HepG2 (cell line): ENCODE measurements at regions of chr4 and their contacts with region 1.

Region 1: GRCh38 chr4:140851032-140851636 is 94.9 kb upstream of the TBC1D9 start:
- DNase-seq: peak; percentile 53
- ATAC-seq: peak; percentile 80
- H3K4me3 ChIP-seq: no peak overlapping the region
- H3K27ac ChIP-seq: no peak overlapping the region
- H3K4me1 ChIP-seq: 0 out of 2 replicates have a peak, but pooled peaks cover 5% of the 10 kb centered on the region
- H3K27me3 ChIP-seq: no peaks in the 10 kb centered on the region
- CTCF ChIP-seq: peak; percentile 85
- EP300 ChIP-seq: no peak
- POLR2A ChIP-seq: no peak
- RAD21 ChIP-seq: peak; percentile 82

Region 2: DNA sequence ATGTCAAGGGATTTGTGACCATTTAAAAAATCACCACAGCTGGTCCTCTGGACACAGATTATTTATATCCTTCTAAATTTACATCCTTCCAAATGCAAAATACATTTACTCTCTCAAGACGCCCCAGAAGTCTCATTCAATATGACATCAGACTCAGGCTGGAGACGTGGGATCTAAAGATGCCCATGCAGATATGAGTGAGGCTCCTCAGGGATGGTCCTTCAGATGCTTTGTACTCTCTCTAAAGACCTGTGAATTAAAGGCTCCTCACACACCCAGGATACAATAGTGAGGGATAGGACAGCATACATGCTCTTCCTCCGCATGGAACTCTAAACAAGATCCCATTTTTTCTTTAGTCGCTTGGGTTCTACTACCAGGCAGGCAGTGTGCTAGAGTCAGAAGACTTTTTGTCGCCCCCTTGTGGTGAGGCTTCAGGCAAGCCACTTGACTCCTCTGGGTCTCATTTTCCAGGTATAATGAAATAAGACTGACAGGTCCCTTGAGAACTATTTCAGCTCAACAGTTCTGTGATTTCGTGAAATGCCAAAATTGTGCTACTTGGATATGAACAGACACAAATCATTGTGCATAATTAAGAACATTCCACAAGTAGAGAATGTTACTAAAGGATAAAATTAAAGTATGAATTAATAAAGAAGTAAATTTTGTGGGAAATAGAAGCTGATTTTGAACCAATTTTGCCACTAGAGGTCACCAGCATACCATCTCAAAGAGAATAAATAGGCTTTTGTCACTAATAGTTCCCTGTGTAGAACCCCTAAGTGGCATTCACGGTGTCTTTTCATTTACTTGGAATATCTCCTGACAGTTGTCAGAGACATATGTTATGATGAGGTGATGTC is 491.3 kb before region 1 on chr4:
- CTCF ChIA-PET with region 1: interaction called, 15 read pairs
- POLR2A ChIA-PET with region 1: no interaction called
- in situ Hi-C with region 1: loop called (anchors 10 kb)
- intact Hi-C with region 1: loop called (anchors 1 kb)
- DNase-seq: peak; percentile 78
- ATAC-seq: peak; percentile 95
- H3K4me3 ChIP-seq: no peak overlapping the region
- H3K27ac ChIP-seq: no peak overlapping the region
- H3K4me1 ChIP-seq: peaks cover 28% of the 10 kb centered on the region
- H3K27me3 ChIP-seq: no peaks in the 10 kb centered on the region
- CTCF ChIP-seq: peak; percentile 71
- EP300 ChIP-seq: no peak
- POLR2A ChIP-seq: no peak
- RAD21 ChIP-seq: 0 out of 2 replicates have a peak, but pooled peaks have one; percentile 16

Region 3: DNA sequence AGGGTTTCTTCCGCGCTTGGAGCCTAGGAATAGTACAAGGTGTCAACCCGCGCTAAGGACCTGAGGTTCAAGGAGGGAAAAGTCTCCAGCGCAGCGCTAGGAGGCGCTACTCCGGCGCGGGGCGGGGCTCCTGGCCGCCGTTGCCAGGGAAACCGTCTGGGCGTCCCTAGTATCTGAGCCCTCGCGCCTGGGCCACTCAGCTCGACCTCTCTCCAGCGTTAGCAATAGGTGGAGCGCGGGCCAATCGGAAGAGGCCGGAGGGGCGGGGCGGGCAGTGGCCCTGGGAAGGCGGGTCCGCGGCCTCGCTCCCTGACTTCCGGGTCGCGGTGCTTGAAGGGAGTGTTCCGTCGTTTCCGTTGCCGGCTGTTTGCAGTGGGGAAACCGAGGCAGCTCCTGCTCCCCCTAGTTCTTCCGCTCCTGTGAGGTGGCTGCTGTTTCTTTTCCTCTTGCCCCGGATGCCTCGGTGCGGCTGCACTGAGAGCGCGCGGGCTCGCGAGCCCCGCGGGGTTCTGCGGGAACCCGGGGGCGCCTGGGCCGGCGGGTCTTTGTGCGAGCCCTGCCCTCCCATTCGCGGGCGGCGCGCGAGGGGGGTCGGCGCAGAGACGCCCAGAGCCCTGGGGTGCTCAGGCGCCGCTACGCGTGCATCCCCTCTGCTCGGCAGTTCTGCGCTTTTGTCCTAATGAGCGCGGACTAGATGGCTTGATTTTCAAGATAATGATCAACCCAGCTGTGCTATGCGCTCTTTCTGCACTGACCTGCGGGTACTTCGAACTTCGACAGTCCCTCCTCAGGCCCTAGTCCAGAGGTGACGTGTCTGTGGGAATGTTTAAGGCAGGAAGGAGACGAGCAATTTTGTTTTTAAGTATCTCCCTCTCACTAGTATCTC is 327.0 kb before region 1 on chr4 and contains the start of gene ELMOD2:
- CTCF ChIA-PET with region 1: no interaction called
- POLR2A ChIA-PET with region 1: no interaction called
- in situ Hi-C with region 1: no loop called
- intact Hi-C with region 1: loop called (anchors 5 kb)
- DNase-seq: peak; percentile 95
- ATAC-seq: peak; percentile 99
- H3K4me3 ChIP-seq: peak within 1 kb of the TSS; percentile 76 to 84 (median 84)
- H3K27ac ChIP-seq: peak within 1 kb of the TSS; percentile 90
- H3K4me1 ChIP-seq: peaks cover 26% of the 10 kb centered on the region
- H3K27me3 ChIP-seq: peaks cover 0 to 3% of the 10 kb centered on the region in 2 experiments; a peak in 1 of 5 replicates
- CTCF ChIP-seq: peak; percentile 96
- EP300 ChIP-seq: peak in 1 of 2 experiments; percentile 56; a peak in 2 of 4 replicates
- POLR2A ChIP-seq: peak; percentile 91 to 93
- RAD21 ChIP-seq: peak; percentile 47; the same call in 1 of the 2 replicates
- total RNA-seq, gene ELMOD2: 25.4 and 38.1 TPM in 2 replicates

Region 4: DNA sequence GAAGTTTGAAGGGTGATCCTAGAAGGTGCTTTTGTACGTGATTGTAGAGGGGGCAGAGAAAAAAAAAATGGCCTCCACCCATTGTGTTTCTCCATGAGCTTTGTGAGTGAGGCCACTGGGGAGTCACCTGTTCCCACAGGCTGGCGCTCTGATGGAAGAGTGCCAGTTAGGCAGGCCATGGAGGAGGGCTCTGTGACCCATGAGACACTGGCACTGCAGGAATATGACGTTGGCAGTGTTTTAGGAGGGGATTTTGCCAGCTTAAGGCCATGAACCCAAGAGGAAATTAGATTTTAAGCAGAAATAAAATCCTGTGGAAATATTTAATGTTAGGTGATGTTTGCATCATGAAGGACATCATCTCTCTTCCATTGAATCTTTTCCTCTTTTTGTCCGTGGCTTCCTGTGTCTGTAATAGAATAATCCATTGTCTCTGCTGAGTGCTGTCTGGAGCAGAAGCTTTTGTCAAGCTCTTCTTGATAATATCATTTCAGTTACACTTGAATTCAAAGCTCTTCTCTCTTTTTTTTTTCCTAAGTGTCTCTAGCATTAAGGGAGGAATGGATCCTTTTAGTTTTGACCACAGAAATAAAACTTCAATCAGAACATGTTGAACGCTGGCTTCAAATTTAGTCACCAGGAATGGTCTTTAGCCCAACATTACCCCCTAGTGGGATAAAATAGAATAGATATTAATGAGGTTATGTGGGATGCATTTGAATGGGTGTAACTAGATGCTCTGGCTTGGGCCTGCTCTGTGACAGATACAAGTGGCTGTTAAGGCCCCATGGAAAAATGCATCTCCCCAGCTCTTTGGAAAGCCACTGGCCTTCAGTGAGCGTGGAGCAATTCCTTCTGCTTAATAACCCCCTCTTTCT is 241.3 kb before region 1 on chr4:
- CTCF ChIA-PET with region 1: interaction called, 7 read pairs
- POLR2A ChIA-PET with region 1: no interaction called
- in situ Hi-C with region 1: loop called (anchors 10 kb)
- intact Hi-C with region 1: loop called (anchors 1 kb)
- DNase-seq: peak; percentile 53
- ATAC-seq: peak; percentile 92
- H3K4me3 ChIP-seq: peak overlapping the region in 1 of 3 experiments; percentile 9; a peak in 1 of 6 replicates
- H3K27ac ChIP-seq: no peak overlapping the region
- H3K4me1 ChIP-seq: peaks cover 27% of the 10 kb centered on the region
- H3K27me3 ChIP-seq: no peaks in the 10 kb centered on the region
- CTCF ChIP-seq: peak; percentile 69
- EP300 ChIP-seq: no peak
- POLR2A ChIP-seq: no peak
- RAD21 ChIP-seq: peak; percentile 32; the same call in 1 of the 2 replicates

Region 5: GRCh38 chr4:140673729-140674128 is 177.4 kb before region 1 on chr4:
- CTCF ChIA-PET with region 1: no interaction called
- POLR2A ChIA-PET with region 1: no interaction called
- in situ Hi-C with region 1: no loop called
- intact Hi-C with region 1: no loop called
- DNase-seq: no peak
- ATAC-seq: no peak
- H3K4me3 ChIP-seq: no peak overlapping the region
- H3K27ac ChIP-seq: no peak overlapping the region
- H3K4me1 ChIP-seq: no peaks in the 10 kb centered on the region
- H3K27me3 ChIP-seq: no peaks in the 10 kb centered on the region
- CTCF ChIP-seq: no peak
- EP300 ChIP-seq: no peak
- POLR2A ChIP-seq: no peak
- RAD21 ChIP-seq: no peak

Region 6: DNA sequence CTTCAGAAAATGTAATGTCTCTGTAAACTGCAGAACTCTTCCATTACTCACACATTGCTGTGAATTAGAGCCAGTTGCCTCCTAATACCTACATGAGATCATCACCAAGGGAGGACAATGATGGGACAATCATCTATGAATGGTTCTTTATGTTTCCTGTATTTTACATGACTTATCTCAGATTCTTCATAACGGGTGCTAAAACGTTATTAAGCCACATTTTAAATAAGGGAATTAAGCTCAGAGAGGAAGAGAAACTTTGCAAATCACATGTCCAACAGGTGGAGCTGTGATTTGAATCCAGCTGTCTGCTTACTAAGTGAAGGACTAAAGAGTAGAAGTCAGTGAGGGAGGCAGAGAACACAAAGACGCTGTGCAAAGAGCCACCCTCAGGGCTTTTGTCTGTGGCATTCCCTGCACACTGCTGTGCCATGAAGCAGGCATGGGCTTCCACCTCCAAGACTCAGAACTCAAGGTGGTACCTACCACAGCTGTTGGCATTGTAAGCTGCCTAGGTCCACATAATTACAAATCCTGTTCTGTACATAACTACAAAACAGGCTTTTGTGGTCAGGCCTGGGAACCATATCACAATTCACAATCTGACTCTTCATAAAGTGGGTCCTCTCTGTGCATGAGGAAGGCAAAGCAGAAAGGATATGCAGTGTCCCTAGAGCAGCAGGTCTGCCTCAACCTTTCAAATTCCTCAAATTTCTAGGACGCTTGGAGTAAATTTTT is 107.8 kb before region 1 on chr4:
- CTCF ChIA-PET with region 1: interaction called, 7 read pairs
- POLR2A ChIA-PET with region 1: no interaction called
- in situ Hi-C with region 1: no loop called
- intact Hi-C with region 1: loop called (anchors 2 kb)
- DNase-seq: peak; percentile 51
- ATAC-seq: peak; percentile 85
- H3K4me3 ChIP-seq: no peak overlapping the region
- H3K27ac ChIP-seq: peak overlapping the region; percentile 52
- H3K4me1 ChIP-seq: peaks cover 68% of the 10 kb centered on the region
- H3K27me3 ChIP-seq: no peaks in the 10 kb centered on the region
- CTCF ChIP-seq: peak; percentile 57
- EP300 ChIP-seq: no peak
- POLR2A ChIP-seq: no peak
- RAD21 ChIP-seq: no peak; the same call in 1 of the 2 replicates